AG04449 (cell line): ENCODE measurements at regions of chr15 and their contacts with region 1.

Region 1: DNA sequence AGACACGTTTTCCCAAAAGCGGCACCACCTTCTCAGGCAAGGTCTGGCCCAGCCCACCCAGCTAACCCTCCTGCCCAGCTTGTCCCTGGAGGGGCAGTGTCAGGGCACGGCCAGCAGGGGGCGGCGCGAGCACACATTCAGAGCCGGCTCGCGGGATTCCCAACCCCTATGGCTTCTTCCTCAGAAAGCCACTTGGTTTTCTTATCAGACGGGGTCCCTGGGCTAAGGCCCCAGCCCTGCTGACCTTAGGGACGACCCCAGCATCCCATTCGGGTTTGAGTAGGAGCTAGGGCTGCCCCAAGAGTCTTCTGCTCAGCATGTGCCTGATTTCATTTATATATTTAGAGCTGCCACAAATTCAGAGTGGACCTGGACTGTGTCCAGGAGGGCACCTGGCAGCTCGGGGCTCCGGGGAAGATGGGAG is 14.5 kb downstream of the RLBP1 start:
- DNase-seq: no peak
- H3K4me3 ChIP-seq: peak overlapping the region; percentile 12; the same call in 1 of the 2 replicates
- CTCF ChIP-seq: peak; percentile 99

Region 2: DNA sequence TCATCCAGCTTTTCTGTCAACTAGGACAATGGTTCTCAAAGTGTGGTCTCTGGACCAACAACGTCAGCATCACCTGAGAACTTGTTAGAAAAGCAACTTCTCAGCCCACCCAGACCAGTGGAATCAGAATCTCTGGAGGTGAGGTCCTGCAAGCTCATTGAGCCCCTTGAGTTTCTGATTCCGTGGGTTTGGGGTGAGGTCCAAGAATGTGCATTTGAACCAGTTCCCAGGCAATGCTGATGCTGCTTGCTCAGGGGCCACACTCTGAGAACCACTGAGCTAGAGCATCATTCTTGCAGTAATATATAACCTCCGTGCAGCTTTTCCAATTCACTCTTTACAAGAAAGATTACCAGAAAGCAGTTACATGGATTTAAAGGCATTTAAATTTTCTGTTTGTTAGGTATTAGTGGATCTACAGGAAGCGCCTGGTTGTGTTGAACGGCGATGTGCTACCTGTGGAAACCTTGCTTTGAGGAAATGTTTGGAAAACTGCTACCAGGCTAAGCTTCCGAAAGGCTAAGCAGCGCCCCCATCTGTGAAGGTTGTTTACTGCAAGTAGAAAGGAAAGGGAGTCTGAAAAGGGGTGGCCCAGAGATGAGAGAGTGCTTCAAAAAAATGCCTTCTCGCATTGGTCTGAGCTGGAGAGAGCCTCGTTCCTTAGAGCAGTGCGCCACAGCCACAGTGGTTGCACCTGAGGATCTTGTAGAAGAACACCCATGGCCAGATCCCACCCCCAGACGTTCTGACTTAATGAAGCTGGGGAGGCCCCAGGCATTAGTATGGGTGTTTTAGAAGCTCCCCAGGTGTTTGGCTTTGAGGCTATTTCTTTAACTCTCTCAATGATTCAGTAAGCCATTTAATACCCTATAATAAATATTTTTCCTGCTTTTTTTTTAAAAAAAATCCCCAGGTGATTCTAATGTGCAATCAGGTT is 35.5 kb before region 1 on chr15:
- CTCF ChIA-PET with region 1: interaction called, 19 read pairs
- POLR2A ChIA-PET with region 1: no interaction called
- DNase-seq: no peak
- H3K4me3 ChIP-seq: no peak overlapping the region
- CTCF ChIP-seq: peak; percentile 74

Region 3: DNA sequence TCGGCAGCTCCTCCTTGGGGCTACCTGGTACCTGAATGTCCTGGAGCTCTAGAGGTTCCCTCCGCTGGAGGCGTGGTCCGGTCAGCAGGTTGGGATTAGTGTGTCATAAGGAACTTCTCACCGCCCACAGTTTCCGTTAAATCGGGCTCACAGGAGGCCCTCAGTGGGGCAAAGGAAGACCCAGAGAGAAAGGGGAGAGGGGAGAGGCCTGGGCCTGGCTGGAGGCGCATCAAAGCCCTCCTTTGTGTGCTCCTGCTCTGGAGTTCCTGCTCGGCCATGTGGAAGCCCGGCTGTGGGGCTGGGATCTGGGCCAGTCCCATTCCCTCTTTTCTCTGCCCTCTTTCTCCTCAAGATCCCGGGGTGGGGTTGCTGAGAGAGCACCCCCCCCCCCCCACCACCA is 14.6 kb after region 1 on chr15 and contains the start of gene RLBP1:
- CTCF ChIA-PET with region 1: interaction called, 85 read pairs
- POLR2A ChIA-PET with region 1: no interaction called
- DNase-seq: no peak
- H3K4me3 ChIP-seq: no peak within 1 kb of the TSS
- CTCF ChIP-seq: no peak

Region 4: GRCh38 chr15:89243691-89244471 is 37.0 kb after region 1 on chr15 and contains the start of gene FANCI:
- CTCF ChIA-PET with region 1: interaction called, 26 read pairs
- POLR2A ChIA-PET with region 1: interaction called, 3 read pairs
- DNase-seq: peak; percentile 52
- H3K4me3 ChIP-seq: peak within 1 kb of the TSS; percentile 95
- CTCF ChIP-seq: peak; percentile 77

Region 5: GRCh38 chr15:89299896-89300295 is 93.0 kb after region 1 on chr15:
- CTCF ChIA-PET with region 1: interaction called, 123 read pairs
- POLR2A ChIA-PET with region 1: interaction called, 3 read pairs
- DNase-seq: peak; percentile 23
- H3K4me3 ChIP-seq: no peak overlapping the region
- CTCF ChIP-seq: peak; percentile 20

Region 6: DNA sequence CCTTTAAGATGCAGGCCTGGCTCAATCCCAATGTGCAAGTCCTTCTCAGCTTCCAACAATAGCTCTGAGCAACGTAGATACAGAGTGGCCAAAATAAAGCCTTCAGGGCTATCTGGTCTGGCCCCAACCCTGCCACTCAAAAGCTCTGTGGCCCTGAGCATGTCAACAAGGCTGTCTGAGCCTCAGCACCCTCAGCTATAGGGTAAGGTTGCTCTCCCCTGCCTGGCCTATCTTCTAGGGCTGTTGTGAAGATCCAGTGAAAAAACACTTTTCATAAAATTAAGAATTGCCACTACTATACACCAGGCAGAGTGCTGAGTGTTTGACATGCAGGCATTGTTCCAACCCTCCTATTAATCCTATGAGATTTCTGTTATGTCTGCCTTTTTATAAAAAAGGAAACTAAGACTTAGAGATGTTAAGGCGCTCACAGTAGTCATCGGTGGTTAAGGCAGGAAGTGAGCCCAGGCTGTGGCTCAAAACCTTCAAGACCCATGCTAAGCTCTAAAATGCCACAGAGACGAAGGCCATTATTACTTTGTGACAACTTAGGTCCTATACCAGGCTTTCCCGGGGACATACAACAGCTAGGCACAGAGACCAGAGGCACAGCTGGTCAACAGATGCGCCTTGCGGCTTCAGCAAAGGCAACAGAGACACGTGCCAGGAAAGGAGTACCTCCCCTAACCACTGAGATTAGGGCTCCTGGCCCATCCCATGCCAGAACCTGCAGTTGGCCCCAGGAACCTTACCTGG is 122.6 kb after region 1 on chr15:
- CTCF ChIA-PET with region 1: interaction called, 14 read pairs
- POLR2A ChIA-PET with region 1: no interaction called
- DNase-seq: no peak
- H3K4me3 ChIP-seq: no peak overlapping the region
- CTCF ChIP-seq: no peak